Sigmoid colon (tissue), 7 donors: ENCODE measurements at regions of chrX and their contacts with region 1.

Region 1: GRCh38 chrX:101595739-101596419 is 21.9 kb downstream of the ARMCX6 start:
- DNase-seq: no peak
- H3K4me3 ChIP-seq: no peak overlapping the region
- H3K27ac ChIP-seq: no peak overlapping the region
- H3K4me1 ChIP-seq: no peaks in the 10 kb centered on the region
- H3K27me3 ChIP-seq: no peaks in the 10 kb centered on the region
- CTCF ChIP-seq: peak; percentile 31 to 49 (median 44)
- EP300 ChIP-seq: no peak
- POLR2A ChIP-seq: no peak

Region 2: GRCh38 chrX:101682723-101683122 is 86.8 kb after region 1 on chrX:
- intact Hi-C with region 1: no loop called
- DNase-seq: no peak
- H3K4me3 ChIP-seq: no peak overlapping the region
- H3K27ac ChIP-seq: no peak overlapping the region
- H3K4me1 ChIP-seq: no peaks in the 10 kb centered on the region
- H3K27me3 ChIP-seq: no peaks in the 10 kb centered on the region
- CTCF ChIP-seq: no peak
- EP300 ChIP-seq: no peak
- POLR2A ChIP-seq: no peak

Region 3: GRCh38 chrX:101759000-101759399 is 163.1 kb after region 1 on chrX:
- intact Hi-C with region 1: loop called (anchors 5 kb)
- DNase-seq: no peak
- H3K4me3 ChIP-seq: no peak overlapping the region
- H3K27ac ChIP-seq: no peak overlapping the region
- H3K4me1 ChIP-seq: no peaks in the 10 kb centered on the region
- H3K27me3 ChIP-seq: no peaks in the 10 kb centered on the region
- CTCF ChIP-seq: peak in 2 of 4 experiments; percentile 16 to 34
- EP300 ChIP-seq: no peak
- POLR2A ChIP-seq: no peak

Region 4: DNA sequence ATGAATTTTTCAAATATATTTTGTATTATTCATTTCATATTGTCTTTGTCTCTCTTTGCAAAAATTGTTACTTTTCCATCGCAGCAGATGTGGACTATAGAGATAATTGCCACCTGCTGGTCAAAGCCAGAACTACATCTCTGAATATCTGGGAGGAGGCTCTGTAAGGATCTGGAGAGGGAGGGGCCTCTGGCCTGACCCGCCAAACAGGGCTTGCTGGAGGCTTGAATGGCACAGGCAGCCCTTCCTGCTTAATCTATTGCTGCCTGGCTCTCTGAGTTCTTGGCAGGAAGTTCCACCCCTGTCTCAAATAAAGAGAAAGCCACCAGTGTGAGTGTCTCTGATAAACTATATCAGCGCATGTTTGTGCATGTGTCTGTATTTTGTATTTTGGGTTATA is 203.5 kb after region 1 on chrX:
- intact Hi-C with region 1: loop called (anchors 5 kb)
- DNase-seq: peak; percentile 88
- H3K4me3 ChIP-seq: peak overlapping the region in 2 of 4 donors; percentile 27 to 29
- H3K27ac ChIP-seq: no peak overlapping the region
- H3K4me1 ChIP-seq: no peaks in the 10 kb centered on the region
- H3K27me3 ChIP-seq: no peaks in the 10 kb centered on the region
- CTCF ChIP-seq: peak; percentile 31 to 63 (median 52)
- EP300 ChIP-seq: no peak
- POLR2A ChIP-seq: no peak